Sigmoid colon (tissue), 7 donors: ENCODE measurements at regions of chr6 and their contacts with region 1.

Region 1: DNA sequence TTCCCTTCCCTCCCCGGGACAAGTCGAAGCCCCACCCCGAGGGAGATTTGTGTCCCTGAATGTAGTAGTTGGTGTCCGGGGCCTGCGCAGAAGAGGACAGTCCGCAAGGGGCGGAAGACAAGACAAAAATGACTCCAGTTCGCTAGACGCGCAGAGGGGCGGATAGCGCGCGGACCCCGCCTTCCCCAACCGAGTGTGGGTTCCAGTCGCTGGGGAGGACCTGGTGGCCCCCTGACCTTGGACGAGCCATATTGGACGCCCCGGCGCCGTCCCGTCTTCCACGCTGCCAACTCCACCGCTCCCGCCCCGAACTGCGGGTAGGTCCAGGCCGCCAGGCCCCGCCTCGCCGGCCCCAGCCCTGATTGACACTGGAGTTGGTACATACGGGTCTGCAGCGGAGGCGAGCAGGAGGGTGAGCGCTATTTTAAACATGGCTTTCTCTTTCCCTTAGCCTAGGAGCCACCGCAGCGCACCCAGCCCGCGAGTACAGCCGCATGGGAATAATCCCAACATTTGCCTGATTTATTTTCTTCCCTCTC is 802 bp downstream of the HMGN3 start:
- DNase-seq: peak; percentile 95
- H3K4me3 ChIP-seq: peak overlapping the region; percentile 64 to 80 (median 74)
- H3K27ac ChIP-seq: peak overlapping the region; percentile 90 to 96 (median 92)
- H3K4me1 ChIP-seq: peaks cover 0 to 18% (median 17%) of the 10 kb centered on the region in 4 donors
- H3K27me3 ChIP-seq: no peaks in the 10 kb centered on the region
- CTCF ChIP-seq: peak; percentile 36 to 54 (median 40)
- EP300 ChIP-seq: no peak
- POLR2A ChIP-seq: peak; percentile 4 to 22

Region 2: DNA sequence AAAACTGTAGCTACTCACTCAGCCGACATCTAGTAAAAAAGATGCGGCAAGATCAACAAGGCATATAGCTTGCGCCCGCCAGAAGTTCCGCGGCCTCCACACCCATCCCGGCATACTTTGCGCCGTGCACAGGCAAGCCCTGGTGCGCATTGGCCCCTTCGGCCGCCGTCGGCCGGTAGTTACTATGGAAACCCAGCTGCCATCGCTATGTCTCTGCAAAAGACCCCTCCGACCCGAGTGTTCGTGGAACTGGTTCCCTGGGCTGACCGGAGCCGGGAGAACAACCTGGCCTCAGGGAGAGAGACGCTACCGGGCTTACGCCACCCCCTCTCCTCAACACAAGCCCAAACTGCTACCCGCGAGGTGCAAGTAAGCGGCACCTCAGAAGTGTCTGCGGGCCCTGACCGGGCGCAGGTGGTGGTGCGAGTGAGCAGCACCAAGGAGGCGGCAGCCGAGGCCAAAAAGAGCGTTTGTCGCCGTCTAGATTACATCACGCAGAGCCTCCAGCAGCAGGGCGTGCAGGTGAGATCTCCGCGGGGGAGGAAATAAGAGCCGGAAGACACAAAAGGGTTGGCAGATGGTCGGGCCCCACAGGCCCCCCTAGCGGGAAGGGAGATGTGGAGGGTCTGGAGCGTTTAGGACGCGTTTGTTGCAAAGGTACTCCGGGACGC is 366.2 kb before region 1 on chr6 and contains the start of gene IRAK1BP1:
- intact Hi-C with region 1: loop called (anchors 2 kb)
- DNase-seq: peak; percentile 83
- H3K4me3 ChIP-seq: peak within 1 kb of the TSS; percentile 65 to 88 (median 80)
- H3K27ac ChIP-seq: peak within 1 kb of the TSS; percentile 39 to 70 (median 67)
- H3K4me1 ChIP-seq: peaks cover 0 to 8% (median 3%) of the 10 kb centered on the region in 4 donors
- H3K27me3 ChIP-seq: no peaks in the 10 kb centered on the region
- CTCF ChIP-seq: no peak
- EP300 ChIP-seq: no peak
- POLR2A ChIP-seq: no peak
- total RNA-seq, gene IRAK1BP1: 4.9 to 8.2 (median 6.2) TPM

Region 3: GRCh38 chr6:79536954-79537747 is 303.5 kb after region 1 on chr6 and contains the start of gene LCA5:
- intact Hi-C with region 1: loop called (anchors 2 kb)
- DNase-seq: peak; percentile 97
- H3K4me3 ChIP-seq: peak within 1 kb of the TSS; percentile 61 to 79 (median 72)
- H3K27ac ChIP-seq: peak within 1 kb of the TSS; percentile 86 to 95 (median 90)
- H3K4me1 ChIP-seq: peaks cover 0 to 19% (median 0%) of the 10 kb centered on the region in 4 donors
- H3K27me3 ChIP-seq: no peaks in the 10 kb centered on the region
- CTCF ChIP-seq: no peak
- EP300 ChIP-seq: no peak
- POLR2A ChIP-seq: peak in 1 of 2 donors; percentile 18
- total RNA-seq, gene LCA5: 5.0 to 10.7 (median 8.8) TPM